Activated naive CD4-positive, alpha-beta T cell treated with anti-CD3 and anti-CD28 coated beads for 36 hours (primary cell): ENCODE measurements at regions of chr7 and their contacts with region 1.

Region 1: GRCh38 chr7:130912862-130913631 is 179.0 kb upstream of the KLF14 start:
- DNase-seq: peak; percentile 92
- H3K4me3 Mint-ChIP-seq: peak overlapping the region; percentile 81
- H3K27ac Mint-ChIP-seq: peak overlapping the region; percentile 97
- H3K4me1 Mint-ChIP-seq: peaks cover 91% of the 10 kb centered on the region
- H3K27me3 Mint-ChIP-seq: no peaks in the 10 kb centered on the region

Region 2: GRCh38 chr7:130182990-130183389 is 730.1 kb before region 1 on chr7:
- CTCF ChIA-PET with region 1: no interaction called
- intact Hi-C with region 1: loop called (anchors 2 kb)
- DNase-seq: no peak
- H3K4me3 Mint-ChIP-seq: no peak overlapping the region
- H3K27ac Mint-ChIP-seq: peak overlapping the region; percentile 65
- H3K4me1 Mint-ChIP-seq: peaks cover 30% of the 10 kb centered on the region
- H3K27me3 Mint-ChIP-seq: no peaks in the 10 kb centered on the region

Region 3: GRCh38 chr7:130695840-130696239 is 217.2 kb before region 1 on chr7:
- CTCF ChIA-PET with region 1: no interaction called
- intact Hi-C with region 1: no loop called
- DNase-seq: no peak
- H3K4me3 Mint-ChIP-seq: no peak overlapping the region
- H3K27ac Mint-ChIP-seq: no peak overlapping the region
- H3K4me1 Mint-ChIP-seq: no peaks in the 10 kb centered on the region
- H3K27me3 Mint-ChIP-seq: no peaks in the 10 kb centered on the region

Region 4: GRCh38 chr7:130926001-130926691 is 13.1 kb after region 1 on chr7:
- CTCF ChIA-PET with region 1: interaction called, 4 read pairs
- intact Hi-C with region 1: loop called (anchors 1 kb)
- DNase-seq: peak; percentile 61
- H3K4me3 Mint-ChIP-seq: no peak overlapping the region
- H3K27ac Mint-ChIP-seq: peak overlapping the region; percentile 94
- H3K4me1 Mint-ChIP-seq: peaks cover 93% of the 10 kb centered on the region
- H3K27me3 Mint-ChIP-seq: no peaks in the 10 kb centered on the region

Region 5: GRCh38 chr7:130966246-130967009 is 53.4 kb after region 1 on chr7:
- CTCF ChIA-PET with region 1: no interaction called
- intact Hi-C with region 1: loop called (anchors 1 kb)
- DNase-seq: no peak
- H3K4me3 Mint-ChIP-seq: peak overlapping the region; percentile 1
- H3K27ac Mint-ChIP-seq: peak overlapping the region; percentile 90
- H3K4me1 Mint-ChIP-seq: peaks cover 77% of the 10 kb centered on the region
- H3K27me3 Mint-ChIP-seq: no peaks in the 10 kb centered on the region

Region 6: GRCh38 chr7:131057015-131057793 is 144.2 kb after region 1 on chr7:
- CTCF ChIA-PET with region 1: no interaction called
- intact Hi-C with region 1: loop called (anchors 2 kb)
- DNase-seq: peak; percentile 43
- H3K4me3 Mint-ChIP-seq: peak overlapping the region; percentile 66
- H3K27ac Mint-ChIP-seq: peak overlapping the region; percentile 98
- H3K4me1 Mint-ChIP-seq: peaks cover 65% of the 10 kb centered on the region
- H3K27me3 Mint-ChIP-seq: no peaks in the 10 kb centered on the region

Region 7: GRCh38 chr7:131327626-131328376 is 414.8 kb after region 1 on chr7 and contains the start of gene MKLN1:
- CTCF ChIA-PET with region 1: no interaction called
- intact Hi-C with region 1: loop called (anchors 2 kb)
- DNase-seq: peak; percentile 90
- H3K4me3 Mint-ChIP-seq: peak within 1 kb of the TSS; percentile 98
- H3K27ac Mint-ChIP-seq: peak within 1 kb of the TSS; percentile 96
- H3K4me1 Mint-ChIP-seq: peaks cover 54% of the 10 kb centered on the region
- H3K27me3 Mint-ChIP-seq: no peaks in the 10 kb centered on the region
- total RNA-seq, gene MKLN1: 29.8 to 34.9 TPM